Activated T-helper 2 cell treated with anti-CD3 and anti-CD28 coated beads, Interferon-gamma antibody, Interleukin-2, Interleukin-4, amounts not matched to agents 10 μg/mL and 5 μg/mL and 100 μg/mL, durations not matched to agents 14 hours and 24 hours and 36 hours (primary cell): ENCODE measurements at regions of chr6 and their contacts with region 1.

Region 1: GRCh38 chr6:96923871-96924493 is 546 bp upstream of the KLHL32 start:
- DNase-seq: no peak
- H3K4me3 Mint-ChIP-seq: peak overlapping the region; percentile 89
- H3K27ac Mint-ChIP-seq: peak overlapping the region; percentile 89
- H3K4me1 Mint-ChIP-seq: peaks cover 35% of the 10 kb centered on the region
- H3K27me3 Mint-ChIP-seq: peaks cover 11% of the 10 kb centered on the region

Region 2: GRCh38 chr6:95577304-95578105 is 1346.5 kb before region 1 on chr6 and contains the start of gene MANEA:
- intact Hi-C with region 1: loop called (anchors 10 kb)
- DNase-seq: peak; percentile 79
- H3K4me3 Mint-ChIP-seq: peak within 1 kb of the TSS; percentile 95
- H3K27ac Mint-ChIP-seq: peak within 1 kb of the TSS; percentile 99
- H3K4me1 Mint-ChIP-seq: peaks cover 45% of the 10 kb centered on the region
- H3K27me3 Mint-ChIP-seq: no peaks in the 10 kb centered on the region
- total RNA-seq, gene MANEA: 22.5 and 23.1 TPM in 2 replicates

Region 3: GRCh38 chr6:96837081-96837971 is 86.7 kb before region 1 on chr6 and contains the start of gene GPR63:
- intact Hi-C with region 1: loop called (anchors 1 kb)
- DNase-seq: peak; percentile 84
- H3K4me3 Mint-ChIP-seq: peak within 1 kb of the TSS; percentile 90
- H3K27ac Mint-ChIP-seq: peak within 1 kb of the TSS; percentile 43
- H3K4me1 Mint-ChIP-seq: peaks cover 34% of the 10 kb centered on the region
- H3K27me3 Mint-ChIP-seq: peaks cover 24% of the 10 kb centered on the region
- total RNA-seq, gene GPR63: 4.5 and 5.0 TPM in 2 replicates

Region 4: DNA sequence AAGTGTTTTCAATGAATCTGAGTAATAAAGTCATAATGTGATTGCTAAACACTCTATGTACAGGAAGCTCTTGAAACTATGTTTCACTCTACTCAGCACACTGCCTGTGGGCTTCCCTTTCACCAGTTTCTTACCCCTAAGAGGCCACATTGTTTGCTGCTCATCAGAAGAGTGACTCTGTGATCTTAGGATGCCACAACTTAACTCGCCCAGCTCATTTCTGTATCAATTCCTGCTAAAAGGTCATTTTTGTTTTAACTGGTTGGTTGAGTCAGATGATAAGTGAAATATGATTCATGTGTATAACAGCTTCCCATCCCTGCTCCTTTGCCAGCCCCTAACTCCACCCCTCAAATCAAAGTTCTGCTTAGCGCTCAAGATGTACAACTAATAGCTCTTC is 16.5 kb before region 1 on chr6:
- intact Hi-C with region 1: loop called (anchors 1 kb)
- DNase-seq: no peak
- H3K4me3 Mint-ChIP-seq: no peak overlapping the region
- H3K27ac Mint-ChIP-seq: no peak overlapping the region
- H3K4me1 Mint-ChIP-seq: peaks cover 24% of the 10 kb centered on the region
- H3K27me3 Mint-ChIP-seq: peaks cover 4% of the 10 kb centered on the region

Region 5: DNA sequence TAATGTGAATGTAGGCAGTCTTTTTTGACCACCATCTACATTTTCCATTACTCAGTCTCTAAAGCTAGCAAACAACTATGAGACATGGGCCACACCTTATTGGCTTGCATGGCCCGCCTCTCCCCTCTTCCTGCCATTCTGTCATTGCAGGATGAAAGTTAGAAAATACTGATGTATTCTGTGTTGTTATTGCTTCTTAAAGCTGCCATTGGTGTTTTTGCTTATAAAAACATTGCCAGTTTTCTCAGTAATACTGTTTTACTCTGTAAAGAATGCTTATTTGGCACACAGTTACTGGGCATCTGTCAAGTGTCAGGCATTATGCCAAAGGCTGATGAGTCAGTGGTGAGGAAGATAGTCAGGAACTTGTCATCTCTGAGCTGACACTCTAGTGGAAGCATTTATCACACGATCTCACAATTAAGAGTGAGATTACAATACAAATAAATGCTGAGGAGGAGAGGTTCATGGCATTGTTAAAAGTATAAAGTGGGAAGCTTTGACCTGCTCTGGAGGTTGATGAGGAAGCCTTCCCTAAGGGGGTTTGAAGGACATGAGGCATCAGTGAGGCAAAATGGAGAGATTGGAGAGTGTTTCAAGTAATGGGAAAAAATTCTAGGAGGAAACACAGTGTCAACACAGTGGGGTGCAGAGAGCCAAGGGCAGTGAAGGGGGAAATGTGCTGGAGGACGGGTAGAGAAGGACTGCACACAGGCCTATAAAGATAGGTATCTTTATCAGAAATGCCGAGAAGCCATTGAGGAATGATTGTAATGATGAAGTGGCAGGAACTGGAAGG is 15.2 kb after region 1 on chr6:
- intact Hi-C with region 1: loop called (anchors 2 kb)
- DNase-seq: no peak
- H3K4me3 Mint-ChIP-seq: no peak overlapping the region
- H3K27ac Mint-ChIP-seq: peak overlapping the region; percentile 13
- H3K4me1 Mint-ChIP-seq: peaks cover 13% of the 10 kb centered on the region
- H3K27me3 Mint-ChIP-seq: no peaks in the 10 kb centered on the region

Region 6: GRCh38 chr6:96967957-96968871 is 44.2 kb after region 1 on chr6:
- intact Hi-C with region 1: no loop called
- DNase-seq: no peak
- H3K4me3 Mint-ChIP-seq: no peak overlapping the region
- H3K27ac Mint-ChIP-seq: no peak overlapping the region
- H3K4me1 Mint-ChIP-seq: no peaks in the 10 kb centered on the region
- H3K27me3 Mint-ChIP-seq: no peaks in the 10 kb centered on the region